CD8-positive, alpha-beta memory T cell (primary cell): ENCODE measurements at regions of chr3 and their contacts with region 1.

Region 1: DNA sequence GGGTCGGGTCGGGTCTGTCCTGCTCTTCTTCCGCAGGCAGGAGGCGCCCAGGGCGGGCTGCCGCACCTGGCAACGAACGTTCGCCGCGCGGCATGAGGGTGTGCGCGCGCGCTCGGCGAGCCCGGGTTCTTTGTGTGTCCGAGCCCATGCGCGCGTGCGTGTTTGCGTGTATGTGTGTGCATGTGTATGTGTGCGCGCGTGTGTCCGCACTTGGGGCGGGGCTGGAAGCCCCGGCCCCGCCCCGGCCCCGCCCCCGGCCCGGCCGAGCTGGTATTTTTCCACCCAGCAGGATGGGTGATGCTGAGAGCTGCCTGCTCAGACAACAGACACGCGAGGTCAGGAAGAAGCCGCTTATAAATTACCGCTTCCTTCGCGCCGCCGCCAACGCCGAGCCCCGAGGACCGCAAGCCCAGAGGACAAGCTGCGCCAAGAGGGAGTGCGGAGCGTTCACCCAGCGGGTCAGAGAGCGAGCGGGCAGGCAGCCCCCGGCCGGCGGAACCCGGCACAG is at the start of gene SLC6A6:
- DNase-seq: peak; percentile 89 to 97 (median 92)
- H3K4me3 ChIP-seq: peak within 1 kb of the TSS; percentile 98
- H3K4me3 Mint-ChIP-seq: peak within 1 kb of the TSS; percentile 91 to 100 (median 98)
- H3K27ac ChIP-seq: peak within 1 kb of the TSS; percentile 89
- H3K27ac Mint-ChIP-seq: peak within 1 kb of the TSS; percentile 94 to 100 (median 99)
- H3K4me1 ChIP-seq: peaks cover 42% of the 10 kb centered on the region
- H3K4me1 Mint-ChIP-seq: peaks cover 47 to 53% (median 51%) of the 10 kb centered on the region in 3 donors
- H3K27me3 ChIP-seq: no peaks in the 10 kb centered on the region
- H3K27me3 Mint-ChIP-seq: no peaks in the 10 kb centered on the region
- total RNA-seq, gene SLC6A6: 44.5 to 44.6 TPM

Region 2: DNA sequence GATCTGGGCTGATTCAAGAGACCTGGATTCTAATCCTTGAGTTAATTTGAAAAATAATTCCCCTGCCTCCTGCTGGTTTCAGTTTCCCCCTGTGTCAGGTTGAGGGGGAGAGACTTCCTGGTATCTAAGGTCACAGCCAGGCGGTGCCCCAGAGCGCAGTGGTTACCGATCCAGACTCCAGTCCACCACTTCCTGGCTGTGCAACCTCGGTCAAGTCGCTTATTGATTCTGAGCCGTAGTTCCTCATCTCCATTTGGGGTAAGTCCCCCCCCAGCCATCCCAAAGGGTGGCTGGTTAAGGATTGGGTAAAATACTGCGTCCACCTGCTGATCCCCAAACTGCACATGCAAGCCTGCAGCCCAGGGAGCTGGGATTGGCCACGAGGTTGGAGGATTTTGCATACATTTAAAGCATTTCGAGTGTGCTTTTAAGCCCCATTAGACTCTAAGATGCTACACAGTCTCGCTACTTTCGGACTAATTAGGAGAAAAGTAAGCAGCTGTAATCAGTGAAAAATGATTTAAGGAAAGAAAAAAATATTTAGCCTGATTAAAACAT is 23.8 kb after region 1 on chr3:
- CTCF ChIA-PET with region 1: interaction called, 73 read pairs
- POLR2A ChIA-PET with region 1: interaction called, 66 read pairs
- DNase-seq: peak; percentile 40 to 83 (median 57)
- H3K4me3 ChIP-seq: no peak overlapping the region
- H3K4me3 Mint-ChIP-seq: peak overlapping the region; percentile 34 to 86 (median 74)
- H3K27ac ChIP-seq: peak overlapping the region; percentile 39
- H3K27ac Mint-ChIP-seq: peak overlapping the region; percentile 93 to 100 (median 98)
- H3K4me1 ChIP-seq: peaks cover 91% of the 10 kb centered on the region
- H3K4me1 Mint-ChIP-seq: peaks cover 90 to 100% (median 97%) of the 10 kb centered on the region in 3 donors
- H3K27me3 ChIP-seq: no peaks in the 10 kb centered on the region
- H3K27me3 Mint-ChIP-seq: peaks cover 0 to 2% of the 10 kb centered on the region in 2 donors

Region 3: GRCh38 chr3:14431892-14432834 is 29.8 kb after region 1 on chr3:
- CTCF ChIA-PET with region 1: interaction called, 73 read pairs
- POLR2A ChIA-PET with region 1: interaction called, 66 read pairs
- DNase-seq: peak; percentile 91 to 98 (median 92)
- H3K4me3 ChIP-seq: peak overlapping the region; percentile 57
- H3K4me3 Mint-ChIP-seq: peak overlapping the region; percentile 68 to 91 (median 83)
- H3K27ac ChIP-seq: peak overlapping the region; percentile 93
- H3K27ac Mint-ChIP-seq: peak overlapping the region; percentile 97 to 100 (median 100)
- H3K4me1 ChIP-seq: peaks cover 92% of the 10 kb centered on the region
- H3K4me1 Mint-ChIP-seq: peaks cover 87 to 98% (median 91%) of the 10 kb centered on the region in 3 donors
- H3K27me3 ChIP-seq: no peaks in the 10 kb centered on the region
- H3K27me3 Mint-ChIP-seq: peaks cover 0 to 3% of the 10 kb centered on the region in 2 donors

Region 4: DNA sequence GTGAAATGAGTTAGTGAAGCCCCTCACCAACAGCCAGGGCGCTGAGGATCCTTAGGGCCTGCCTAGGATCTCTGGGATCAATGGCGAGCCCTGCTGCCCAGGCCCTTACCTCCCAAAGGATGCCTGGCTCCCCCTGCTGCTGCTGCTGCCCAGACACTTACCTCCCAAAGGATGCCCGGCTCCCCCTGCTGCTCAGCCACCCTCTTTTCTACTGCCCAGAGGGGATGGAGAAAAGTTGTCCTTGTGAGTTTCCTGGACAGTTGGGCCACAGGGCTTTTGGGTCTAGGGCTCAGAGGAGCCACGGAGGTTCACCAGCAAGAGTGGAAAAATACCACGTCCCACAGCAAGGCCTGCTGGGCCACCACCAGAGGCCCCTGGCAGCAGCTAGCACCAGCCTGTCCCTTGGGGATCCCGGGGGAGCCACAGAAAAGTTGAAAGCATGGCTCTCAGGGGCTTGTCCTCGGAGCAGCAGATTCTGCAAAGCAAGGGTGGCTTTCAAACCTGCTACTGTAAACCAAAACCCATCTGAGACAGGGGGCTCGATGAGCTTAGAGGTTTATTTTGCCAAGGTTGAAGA is 59.5 kb after region 1 on chr3:
- CTCF ChIA-PET with region 1: interaction called, 62 read pairs
- POLR2A ChIA-PET with region 1: interaction called, 7 read pairs
- DNase-seq: peak; percentile 10 to 68 (median 23)
- H3K4me3 ChIP-seq: no peak overlapping the region
- H3K4me3 Mint-ChIP-seq: no peak overlapping the region
- H3K27ac ChIP-seq: no peak overlapping the region
- H3K27ac Mint-ChIP-seq: peak overlapping the region in 1 of 8 donors; percentile 87
- H3K4me1 ChIP-seq: no peaks in the 10 kb centered on the region
- H3K4me1 Mint-ChIP-seq: peaks cover 0 to 5% (median 4%) of the 10 kb centered on the region in 3 donors
- H3K27me3 ChIP-seq: no peaks in the 10 kb centered on the region
- H3K27me3 Mint-ChIP-seq: no peaks in the 10 kb centered on the region

Region 5: DNA sequence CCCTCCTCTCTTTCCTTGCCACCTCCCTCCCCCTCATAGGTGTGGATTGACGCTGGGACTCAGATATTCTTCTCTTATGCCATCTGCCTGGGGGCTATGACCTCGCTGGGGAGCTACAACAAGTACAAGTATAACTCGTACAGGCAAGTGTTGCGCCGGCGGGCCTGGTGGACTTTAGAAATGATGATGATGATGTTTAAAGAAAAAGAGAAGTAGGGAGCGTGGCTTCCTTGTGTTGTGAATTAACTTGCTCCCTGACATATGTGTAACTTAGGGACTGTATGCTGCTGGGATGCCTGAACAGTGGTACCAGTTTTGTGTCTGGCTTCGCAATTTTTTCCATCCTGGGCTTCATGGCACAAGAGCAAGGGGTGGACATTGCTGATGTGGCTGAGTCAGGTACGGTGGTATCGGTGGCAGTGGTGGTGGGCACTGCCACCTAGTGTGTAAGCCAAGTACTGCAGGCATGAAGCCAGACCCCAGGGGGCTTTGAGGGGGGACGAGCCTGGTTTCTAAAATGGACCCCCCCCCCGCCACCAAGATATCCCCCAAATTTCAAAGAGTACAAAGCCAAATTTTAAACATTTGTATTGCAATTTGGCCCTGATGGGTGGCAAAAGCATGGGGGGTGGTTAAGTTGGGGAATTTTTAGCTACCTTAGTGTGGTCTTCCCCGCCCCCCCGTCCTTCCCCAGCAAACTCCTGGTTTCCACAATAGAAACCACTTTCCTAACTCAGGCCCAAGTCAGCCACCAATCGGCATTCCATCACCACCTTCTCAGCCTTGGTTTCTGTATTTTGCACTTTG is 65.7 kb after region 1 on chr3:
- CTCF ChIA-PET with region 1: interaction called, 62 read pairs
- POLR2A ChIA-PET with region 1: no interaction called
- DNase-seq: peak; percentile 18 to 65 (median 38)
- H3K4me3 ChIP-seq: no peak overlapping the region
- H3K4me3 Mint-ChIP-seq: no peak overlapping the region
- H3K27ac ChIP-seq: no peak overlapping the region
- H3K27ac Mint-ChIP-seq: peak overlapping the region in 3 of 8 donors; percentile 40 to 83 (median 66)
- H3K4me1 ChIP-seq: no peaks in the 10 kb centered on the region
- H3K4me1 Mint-ChIP-seq: peaks cover 0 to 3% (median 0%) of the 10 kb centered on the region in 3 donors
- H3K27me3 ChIP-seq: no peaks in the 10 kb centered on the region
- H3K27me3 Mint-ChIP-seq: no peaks in the 10 kb centered on the region

Region 6: DNA sequence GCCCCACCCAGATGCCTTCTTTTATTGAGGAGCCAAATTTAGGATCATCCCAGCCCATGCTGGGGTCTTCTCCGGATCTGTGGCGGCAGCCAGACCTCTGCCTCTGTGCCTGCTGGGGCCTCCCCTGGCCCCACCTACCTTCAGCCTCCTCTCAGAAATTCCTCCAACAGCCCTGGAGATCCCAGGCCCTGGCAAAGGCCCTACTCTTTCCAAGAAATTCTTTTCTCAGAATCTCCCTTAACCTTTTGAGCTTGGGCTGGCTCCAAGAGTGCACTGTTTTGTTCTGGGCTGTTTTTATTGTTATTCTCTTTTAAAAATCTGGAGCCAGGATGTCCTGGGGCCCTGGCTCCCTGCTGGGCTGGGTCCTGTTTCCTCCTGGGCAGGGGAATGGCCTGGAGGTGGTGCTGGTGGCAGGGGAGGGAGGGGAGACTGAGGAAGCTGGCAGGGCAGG is 79.9 kb after region 1 on chr3:
- CTCF ChIA-PET with region 1: no interaction called
- POLR2A ChIA-PET with region 1: no interaction called
- DNase-seq: no peak
- H3K4me3 ChIP-seq: no peak overlapping the region
- H3K4me3 Mint-ChIP-seq: no peak overlapping the region
- H3K27ac ChIP-seq: no peak overlapping the region
- H3K27ac Mint-ChIP-seq: peak overlapping the region in 1 of 8 donors; percentile 6
- H3K4me1 ChIP-seq: no peaks in the 10 kb centered on the region
- H3K4me1 Mint-ChIP-seq: no peaks in the 10 kb centered on the region
- H3K27me3 ChIP-seq: no peaks in the 10 kb centered on the region
- H3K27me3 Mint-ChIP-seq: no peaks in the 10 kb centered on the region